ENCODE measurements at regions of chr2 and their contacts with region 1.

Region 1: GRCh38 chr2:73926493-73927338 is at the start of gene DGUOK:
- DNase-seq: peak; percentile 81 to 99 (median 98)
- ATAC-seq: peak; percentile 99
- H3K4me3 ChIP-seq: peak within 1 kb of the TSS; percentile 87
- H3K4me3 Mint-ChIP-seq: peak within 1 kb of the TSS; percentile 80 to 97 (median 92)
- H3K27ac ChIP-seq: peak within 1 kb of the TSS; percentile 98
- H3K27ac Mint-ChIP-seq: peak within 1 kb of the TSS; percentile 79 to 99 (median 98)
- H3K4me1 ChIP-seq: peaks cover 37 to 41% of the 10 kb centered on the region in 2 donors
- H3K4me1 Mint-ChIP-seq: peaks cover 35 to 57% (median 52%) of the 10 kb centered on the region in 7 donors
- H3K27me3 ChIP-seq: no peaks in the 10 kb centered on the region
- H3K27me3 Mint-ChIP-seq: no peaks in the 10 kb centered on the region
- total RNA-seq, gene DGUOK: 43.1 to 73.9 (median 65.8) TPM

Region 2: GRCh38 chr2:73907840-73908452 is 18.8 kb before region 1 on chr2:
- CTCF ChIA-PET with region 1: no interaction called
- POLR2A ChIA-PET with region 1: interaction called, 5 read pairs
- intact Hi-C with region 1: loop called in 1 of 2 experiments (anchors 1 kb)
- DNase-seq: peak in 8 of 9 donors; percentile 37 to 64 (median 48)
- ATAC-seq: peak; percentile 92
- H3K4me3 ChIP-seq: no peak overlapping the region
- H3K4me3 Mint-ChIP-seq: no peak overlapping the region
- H3K27ac ChIP-seq: no peak overlapping the region
- H3K27ac Mint-ChIP-seq: peak overlapping the region in 4 of 9 donors; percentile 19 to 61 (median 40)
- H3K4me1 ChIP-seq: no peaks in the 10 kb centered on the region
- H3K4me1 Mint-ChIP-seq: peaks cover 0 to 3% (median 0%) of the 10 kb centered on the region in 7 donors
- H3K27me3 ChIP-seq: no peaks in the 10 kb centered on the region
- H3K27me3 Mint-ChIP-seq: no peaks in the 10 kb centered on the region

Region 3: DNA sequence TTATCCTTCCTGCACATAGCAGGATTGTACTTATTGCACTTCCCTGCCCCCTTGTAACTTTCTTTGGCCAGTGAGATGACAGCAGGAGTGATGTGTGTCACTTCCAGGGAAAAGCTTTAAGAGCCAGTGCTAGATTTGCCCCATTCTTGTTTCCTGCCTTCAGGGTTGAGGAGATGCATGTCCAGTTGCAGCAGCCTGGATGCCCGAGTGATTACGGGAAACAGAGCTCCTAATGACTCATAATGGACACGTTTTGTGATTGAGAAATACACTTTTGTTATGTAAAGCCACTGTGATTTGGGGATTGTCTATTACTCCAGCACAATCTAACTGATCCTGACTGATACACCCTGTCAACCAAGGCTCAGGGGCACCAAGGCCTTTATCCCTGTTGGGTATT is 53.0 kb after region 1 on chr2:
- CTCF ChIA-PET with region 1: interaction called, 3 read pairs
- POLR2A ChIA-PET with region 1: interaction called, 4 read pairs
- intact Hi-C with region 1: loop called in 1 of 2 experiments (anchors 1 kb)
- DNase-seq: no peak
- ATAC-seq: peak; percentile 13
- H3K4me3 ChIP-seq: peak overlapping the region; percentile 43
- H3K4me3 Mint-ChIP-seq: peak overlapping the region; percentile 48 to 80 (median 75)
- H3K27ac ChIP-seq: peak overlapping the region; percentile 63
- H3K27ac Mint-ChIP-seq: peak overlapping the region in 8 of 9 donors; percentile 81 to 96 (median 90)
- H3K4me1 ChIP-seq: peaks cover 33 to 58% of the 10 kb centered on the region in 2 donors
- H3K4me1 Mint-ChIP-seq: peaks cover 58 to 92% (median 84%) of the 10 kb centered on the region in 7 donors
- H3K27me3 ChIP-seq: no peaks in the 10 kb centered on the region
- H3K27me3 Mint-ChIP-seq: peaks cover 0 to 28% (median 0%) of the 10 kb centered on the region in 5 donors

Region 4: GRCh38 chr2:74080346-74080745 is 153.6 kb after region 1 on chr2:
- CTCF ChIA-PET with region 1: no interaction called
- POLR2A ChIA-PET with region 1: no interaction called
- intact Hi-C with region 1: no loop called
- DNase-seq: peak in 1 of 9 donors; percentile 3
- ATAC-seq: peak; percentile 52
- H3K4me3 ChIP-seq: no peak overlapping the region
- H3K4me3 Mint-ChIP-seq: no peak overlapping the region
- H3K27ac ChIP-seq: no peak overlapping the region
- H3K27ac Mint-ChIP-seq: peak overlapping the region in 1 of 9 donors; percentile 38
- H3K4me1 ChIP-seq: no peaks in the 10 kb centered on the region
- H3K4me1 Mint-ChIP-seq: peaks cover 0 to 17% (median 4%) of the 10 kb centered on the region in 7 donors
- H3K27me3 ChIP-seq: no peaks in the 10 kb centered on the region
- H3K27me3 Mint-ChIP-seq: no peaks in the 10 kb centered on the region

Region 5: GRCh38 chr2:74119912-74120825 is 193.5 kb after region 1 on chr2:
- CTCF ChIA-PET with region 1: no interaction called
- POLR2A ChIA-PET with region 1: interaction called, 6 read pairs
- intact Hi-C with region 1: loop called (anchors 1 to 2 kb)
- DNase-seq: peak; percentile 69 to 91 (median 80)
- ATAC-seq: peak; percentile 98
- H3K4me3 ChIP-seq: peak overlapping the region; percentile 89
- H3K4me3 Mint-ChIP-seq: peak overlapping the region; percentile 82 to 92 (median 88)
- H3K27ac ChIP-seq: peak overlapping the region; percentile 83
- H3K27ac Mint-ChIP-seq: peak overlapping the region; percentile 79 to 96 (median 91)
- H3K4me1 ChIP-seq: no peaks in the 10 kb centered on the region
- H3K4me1 Mint-ChIP-seq: peaks cover 8 to 12% (median 9%) of the 10 kb centered on the region in 7 donors
- H3K27me3 ChIP-seq: no peaks in the 10 kb centered on the region
- H3K27me3 Mint-ChIP-seq: peaks cover 0 to 5% (median 2%) of the 10 kb centered on the region in 5 donors

Region 6: DNA sequence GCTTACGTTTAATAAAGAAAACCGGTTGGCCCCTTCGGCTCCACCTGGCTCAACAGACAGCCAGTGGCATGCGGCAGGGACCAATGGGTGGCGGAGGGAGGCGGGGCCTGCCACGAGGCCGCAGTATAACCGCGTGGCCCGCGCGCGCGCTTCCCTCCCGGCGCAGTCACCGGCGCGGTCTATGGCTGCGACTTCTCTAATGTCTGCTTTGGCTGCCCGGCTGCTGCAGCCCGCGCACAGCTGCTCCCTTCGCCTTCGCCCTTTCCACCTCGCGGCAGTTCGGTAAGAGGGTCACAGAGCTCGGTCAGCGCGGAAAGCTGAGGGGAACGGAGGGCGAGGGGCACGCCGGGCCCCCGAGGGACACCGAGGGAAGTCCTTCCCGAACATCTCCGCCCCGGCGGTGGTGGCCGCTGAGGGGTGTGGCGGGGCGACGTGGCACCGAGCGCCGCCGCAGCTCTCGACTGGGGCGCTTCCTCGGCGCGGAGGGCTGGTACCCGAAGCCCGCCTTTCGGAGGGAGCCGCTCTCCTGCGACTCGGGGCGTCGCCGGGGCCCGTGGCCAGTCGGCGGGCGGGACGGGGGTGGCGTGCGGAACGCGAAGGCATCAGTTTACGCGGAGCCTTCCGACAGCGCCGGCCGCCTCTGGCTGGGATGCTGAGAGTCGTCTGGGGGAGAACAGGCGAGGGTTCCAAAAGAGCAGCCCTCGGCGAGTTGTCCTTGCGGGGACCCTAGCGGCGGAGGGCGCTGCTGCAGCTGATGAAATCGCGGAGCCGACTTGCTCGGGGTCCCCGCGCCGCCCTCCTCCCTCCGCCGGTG is 272.0 kb after region 1 on chr2 and contains the start of gene MTHFD2:
- CTCF ChIA-PET with region 1: no interaction called
- POLR2A ChIA-PET with region 1: no interaction called
- intact Hi-C with region 1: loop called (anchors 2 kb)
- DNase-seq: peak; percentile 76 to 93 (median 82)
- ATAC-seq: peak; percentile 94
- H3K4me3 ChIP-seq: peak within 1 kb of the TSS; percentile 65
- H3K4me3 Mint-ChIP-seq: peak within 1 kb of the TSS; percentile 90 to 100 (median 96)
- H3K27ac ChIP-seq: peak within 1 kb of the TSS; percentile 88
- H3K27ac Mint-ChIP-seq: peak within 1 kb of the TSS; percentile 94 to 100 (median 97)
- H3K4me1 ChIP-seq: peaks cover 13 to 16% of the 10 kb centered on the region in 2 donors
- H3K4me1 Mint-ChIP-seq: peaks cover 29 to 50% (median 35%) of the 10 kb centered on the region in 7 donors
- H3K27me3 ChIP-seq: no peaks in the 10 kb centered on the region
- H3K27me3 Mint-ChIP-seq: no peaks in the 10 kb centered on the region
- total RNA-seq, gene MTHFD2: 14.5 to 186 (median 25.1) TPM

Region 7: GRCh38 chr2:74458132-74458925 is 531.6 kb after region 1 on chr2 and contains the start of gene WBP1:
- CTCF ChIA-PET with region 1: no interaction called
- POLR2A ChIA-PET with region 1: no interaction called
- intact Hi-C with region 1: loop called in 1 of 2 experiments (anchors 2 kb)
- DNase-seq: peak in 8 of 9 donors; percentile 85 to 100 (median 100)
- ATAC-seq: peak; percentile 89
- H3K4me3 ChIP-seq: peak within 1 kb of the TSS; percentile 70
- H3K4me3 Mint-ChIP-seq: peak within 1 kb of the TSS; percentile 87 to 99 (median 96)
- H3K27ac ChIP-seq: peak within 1 kb of the TSS; percentile 100
- H3K27ac Mint-ChIP-seq: peak within 1 kb of the TSS; percentile 88 to 100 (median 99)
- H3K4me1 ChIP-seq: peaks cover 30 to 34% of the 10 kb centered on the region in 2 donors
- H3K4me1 Mint-ChIP-seq: peaks cover 38 to 68% (median 58%) of the 10 kb centered on the region in 7 donors
- H3K27me3 ChIP-seq: no peaks in the 10 kb centered on the region
- H3K27me3 Mint-ChIP-seq: peaks cover 0 to 2% (median 0%) of the 10 kb centered on the region in 5 donors
- total RNA-seq, gene WBP1: 53.6 to 127 (median 85.4) TPM